ENCODE measurements at regions of chr20 and their contacts with region 1.

Region 1: GRCh38 chr20:2955257-2955970 is 82.1 kb downstream of the PTPRA start:
- DNase-seq: peak; percentile 27
- H3K4me3 Mint-ChIP-seq: no peak overlapping the region
- H3K27ac Mint-ChIP-seq: peak overlapping the region; percentile 79
- H3K4me1 Mint-ChIP-seq: peaks cover 25% of the 10 kb centered on the region
- H3K27me3 Mint-ChIP-seq: no peaks in the 10 kb centered on the region

Region 2: DNA sequence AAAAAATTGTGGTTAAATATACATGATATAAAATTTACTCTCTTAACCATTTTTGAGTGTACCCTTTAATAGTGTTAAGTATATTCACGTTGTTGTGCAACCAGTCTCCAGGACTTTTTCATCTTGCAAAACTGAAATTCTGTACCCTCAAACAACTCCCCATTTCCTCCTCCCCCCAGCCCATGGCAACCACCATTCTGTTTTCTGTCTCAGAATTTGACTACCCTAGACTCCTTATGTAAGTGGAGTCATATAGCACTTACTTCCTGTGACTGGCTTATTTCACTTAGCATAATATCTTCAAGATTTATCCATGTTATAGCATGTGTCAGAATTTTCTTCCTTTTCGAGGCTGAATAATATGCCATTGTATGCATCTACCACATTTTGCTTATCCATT is 109.8 kb before region 1 on chr20:
- CTCF ChIA-PET with region 1: no interaction called
- POLR2A ChIA-PET with region 1: no interaction called
- intact Hi-C with region 1: no loop called
- DNase-seq: peak; percentile 39
- H3K4me3 Mint-ChIP-seq: no peak overlapping the region
- H3K27ac Mint-ChIP-seq: peak overlapping the region; percentile 5
- H3K4me1 Mint-ChIP-seq: peaks cover 38% of the 10 kb centered on the region
- H3K27me3 Mint-ChIP-seq: no peaks in the 10 kb centered on the region

Region 3: DNA sequence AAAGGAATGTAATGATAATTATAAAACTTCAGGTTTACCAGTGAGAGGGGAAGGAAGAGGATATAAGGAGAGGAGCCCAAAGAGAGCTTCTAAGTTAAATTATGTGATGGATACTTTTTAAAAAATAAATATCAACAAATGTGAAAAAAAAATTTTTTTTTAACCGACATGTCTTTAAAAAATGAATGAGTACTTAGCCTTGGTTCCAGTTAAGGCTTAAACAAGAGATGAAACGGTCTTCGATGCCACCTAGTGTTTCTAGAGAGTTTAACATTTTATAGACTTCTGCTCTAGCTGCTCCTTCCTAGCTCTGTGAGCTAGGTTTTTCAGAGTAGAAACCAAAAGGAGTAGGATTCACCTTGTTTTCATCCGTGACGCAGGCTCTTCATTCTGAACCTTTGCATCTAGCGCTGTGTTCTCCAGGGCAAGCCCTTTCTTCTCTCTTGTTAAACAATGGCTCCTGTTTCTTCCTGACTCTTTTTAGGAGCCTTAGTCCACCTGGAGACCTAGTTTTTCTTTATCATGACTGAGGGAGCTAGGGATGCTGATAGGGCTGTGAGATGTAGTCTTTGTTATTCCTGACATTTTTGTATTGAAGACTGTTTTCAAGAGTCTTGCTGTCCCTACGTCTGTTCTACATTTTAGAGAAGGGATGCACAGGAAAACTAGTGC is 45.6 kb after region 1 on chr20:
- CTCF ChIA-PET with region 1: interaction called, 11 read pairs
- POLR2A ChIA-PET with region 1: no interaction called
- intact Hi-C with region 1: no loop called
- DNase-seq: no peak
- H3K4me3 Mint-ChIP-seq: no peak overlapping the region
- H3K27ac Mint-ChIP-seq: peak overlapping the region; percentile 51
- H3K4me1 Mint-ChIP-seq: peaks cover 9% of the 10 kb centered on the region
- H3K27me3 Mint-ChIP-seq: no peaks in the 10 kb centered on the region